AG04450 (cell line): ENCODE measurements at regions of chr12 and their contacts with region 1.

Region 1: GRCh38 chr12:40312982-40313576 is 88.3 kb downstream of the LRRK2 start:
- DNase-seq: no peak
- H3K4me3 ChIP-seq: no peak overlapping the region
- H3K27ac ChIP-seq: no peak overlapping the region
- H3K27me3 ChIP-seq: no peaks in the 10 kb centered on the region
- CTCF ChIP-seq: peak; percentile 53

Region 2: DNA sequence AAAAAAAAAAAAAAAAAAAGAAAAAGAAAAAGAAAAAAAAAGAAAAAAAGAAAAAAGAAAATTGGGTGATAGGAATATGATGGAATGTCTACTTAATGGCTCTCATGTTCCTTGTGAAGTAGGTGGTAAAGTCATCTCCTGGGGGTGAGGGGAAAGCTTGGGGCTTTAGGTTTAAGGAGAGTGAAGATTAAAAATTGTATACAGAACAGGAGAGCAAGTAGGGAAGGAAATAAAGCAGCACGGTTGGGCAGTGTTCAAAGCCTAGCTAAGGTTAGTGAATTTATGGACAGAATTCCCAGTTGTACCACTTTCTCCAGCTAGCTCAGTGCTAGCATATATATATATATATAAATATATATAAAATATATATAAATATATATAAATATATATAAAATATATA is 167.2 kb before region 1 on chr12:
- CTCF ChIA-PET with region 1: interaction called, 28 read pairs
- POLR2A ChIA-PET with region 1: no interaction called
- DNase-seq: no peak
- H3K4me3 ChIP-seq: no peak overlapping the region
- H3K27ac ChIP-seq: no peak overlapping the region
- H3K27me3 ChIP-seq: no peaks in the 10 kb centered on the region
- CTCF ChIP-seq: no peak

Region 3: GRCh38 chr12:40152783-40153383 is 160.2 kb before region 1 on chr12:
- CTCF ChIA-PET with region 1: interaction called, 28 read pairs
- POLR2A ChIA-PET with region 1: no interaction called
- DNase-seq: peak; percentile 6
- H3K4me3 ChIP-seq: no peak overlapping the region
- H3K27ac ChIP-seq: no peak overlapping the region
- H3K27me3 ChIP-seq: no peaks in the 10 kb centered on the region
- CTCF ChIP-seq: peak; percentile 83